HEK293 (cell line): ENCODE measurements at regions of chr11 and their contacts with region 1.

Region 1: GRCh38 chr11:112280268-112281126 is 19.8 kb upstream of the PLET1 start:
- H3K4me3 ChIP-seq: peak overlapping the region; percentile 26
- H3K27ac ChIP-seq: no peak overlapping the region
- H3K4me1 ChIP-seq: no peaks in the 10 kb centered on the region
- CTCF ChIP-seq: peak; percentile 76

Region 2: DNA sequence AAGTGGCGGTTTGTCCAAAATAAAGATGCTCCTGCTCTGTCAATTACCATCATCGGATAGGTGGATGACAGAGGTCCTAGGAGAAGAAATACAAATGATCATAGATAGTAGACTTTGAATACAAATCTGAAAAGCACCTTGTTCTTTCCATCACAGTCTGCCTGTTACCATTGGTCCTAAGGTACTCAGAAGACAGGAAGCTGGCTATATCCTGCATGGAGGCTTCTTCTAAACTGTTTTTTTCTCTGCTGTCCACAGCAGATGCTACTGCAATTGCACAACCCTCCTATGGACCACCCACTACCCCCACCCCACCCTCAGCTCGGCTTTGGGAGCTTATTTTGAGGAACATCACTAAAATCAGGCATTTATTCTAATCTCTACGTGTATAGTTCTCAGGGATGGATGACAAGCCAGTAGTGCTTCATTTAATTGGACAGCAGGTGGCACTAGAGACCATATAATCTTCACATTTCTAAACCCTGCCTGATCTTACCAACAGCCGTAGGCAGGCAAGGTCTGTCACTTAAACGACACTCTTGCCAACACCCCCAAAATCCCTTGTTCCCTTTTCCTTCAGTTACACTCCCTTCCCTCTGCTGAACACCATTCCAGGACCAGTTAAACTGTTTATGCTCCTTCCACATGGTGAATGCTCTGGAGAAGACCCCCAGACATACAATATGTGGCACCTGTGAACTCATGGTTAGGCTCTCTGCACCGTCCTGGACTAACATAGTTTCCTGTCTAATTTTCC is 60.8 kb before region 1 on chr11:
- CTCF ChIA-PET with region 1: interaction called, 308 read pairs
- POLR2A ChIA-PET with region 1: no interaction called
- H3K4me3 ChIP-seq: no peak overlapping the region
- H3K27ac ChIP-seq: no peak overlapping the region
- H3K4me1 ChIP-seq: no peaks in the 10 kb centered on the region
- CTCF ChIP-seq: peak; percentile 68

Region 3: DNA sequence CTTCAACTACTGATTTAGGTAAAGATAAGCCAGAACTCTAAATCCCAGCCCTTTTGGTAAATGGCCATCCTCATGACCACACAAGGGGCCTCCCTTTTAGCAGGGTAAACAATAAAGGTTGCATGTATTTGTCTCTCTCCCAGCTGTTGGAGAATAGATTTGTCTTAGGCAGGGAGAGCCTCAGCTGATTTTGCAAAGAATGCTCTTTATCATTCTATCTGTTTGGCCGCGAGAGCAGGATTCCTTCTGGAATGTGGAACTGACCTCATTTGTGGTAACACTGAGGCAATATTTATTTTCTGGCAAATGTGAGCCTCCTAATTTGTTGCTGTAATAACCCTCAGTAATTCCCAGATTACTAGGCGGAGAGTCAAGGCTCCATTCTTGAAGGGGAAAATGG is 39.0 kb before region 1 on chr11:
- CTCF ChIA-PET with region 1: interaction called, 14 read pairs
- POLR2A ChIA-PET with region 1: no interaction called
- H3K4me3 ChIP-seq: no peak overlapping the region
- H3K27ac ChIP-seq: no peak overlapping the region
- H3K4me1 ChIP-seq: no peaks in the 10 kb centered on the region
- CTCF ChIP-seq: no peak